ENCODE measurements at regions of chr3 and their contacts with region 1.

Region 1: GRCh38 chr3:114418724-114419543 is 125.1 kb downstream of the TIGIT start:
- DNase-seq: peak; percentile 67
- ATAC-seq: peak; percentile 97
- H3K4me3 ChIP-seq: no peak overlapping the region
- H3K27ac ChIP-seq: no peak overlapping the region
- H3K4me1 ChIP-seq: no peaks in the 10 kb centered on the region
- H3K27me3 ChIP-seq: no peaks in the 10 kb centered on the region; the same call in 1 of the 2 replicates
- CTCF ChIP-seq: peak; percentile 90

Region 2: GRCh38 chr3:114362815-114363214 is 56.1 kb before region 1 on chr3:
- CTCF ChIA-PET with region 1: interaction called, 3 read pairs
- POLR2A ChIA-PET with region 1: no interaction called
- intact Hi-C with region 1: loop called (anchors 1 kb)
- DNase-seq: peak; percentile 37
- ATAC-seq: peak; percentile 81
- H3K4me3 ChIP-seq: no peak overlapping the region
- H3K27ac ChIP-seq: no peak overlapping the region
- H3K4me1 ChIP-seq: no peaks in the 10 kb centered on the region
- H3K27me3 ChIP-seq: peaks cover 6% of the 10 kb centered on the region
- CTCF ChIP-seq: peak; percentile 74

Region 3: GRCh38 chr3:114383875-114384557 is 34.9 kb before region 1 on chr3:
- CTCF ChIA-PET with region 1: no interaction called
- POLR2A ChIA-PET with region 1: no interaction called
- intact Hi-C with region 1: loop called (anchors 1 kb)
- DNase-seq: peak; percentile 77
- ATAC-seq: peak; percentile 91
- H3K4me3 ChIP-seq: no peak overlapping the region
- H3K27ac ChIP-seq: no peak overlapping the region
- H3K4me1 ChIP-seq: no peaks in the 10 kb centered on the region
- H3K27me3 ChIP-seq: no peaks in the 10 kb centered on the region
- CTCF ChIP-seq: peak; percentile 92

Region 4: GRCh38 chr3:114597013-114597412 is 178.1 kb after region 1 on chr3:
- CTCF ChIA-PET with region 1: no interaction called
- POLR2A ChIA-PET with region 1: no interaction called
- intact Hi-C with region 1: loop called (anchors 10 kb)
- DNase-seq: peak; percentile 6
- ATAC-seq: peak; percentile 29; the same call in 1 of the 2 replicates
- H3K4me3 ChIP-seq: no peak overlapping the region
- H3K27ac ChIP-seq: no peak overlapping the region
- H3K4me1 ChIP-seq: no peaks in the 10 kb centered on the region
- H3K27me3 ChIP-seq: no peaks in the 10 kb centered on the region
- CTCF ChIP-seq: peak; percentile 39; the same call in 1 of the 2 replicates